ENCODE measurements at regions of chr18 and their contacts with region 1.

Region 1: GRCh38 chr18:21073180-21073579 is 38.4 kb downstream of the ROCK1 start:
- DNase-seq: no peak
- ATAC-seq: no peak
- H3K4me3 Mint-ChIP-seq: no peak overlapping the region
- H3K27ac Mint-ChIP-seq: no peak overlapping the region
- H3K4me1 Mint-ChIP-seq: peaks cover 54% of the 10 kb centered on the region
- H3K27me3 Mint-ChIP-seq: no peaks in the 10 kb centered on the region

Region 2: GRCh38 chr18:21085579-21086166 is 12.5 kb after region 1 on chr18:
- CTCF ChIA-PET with region 1: no interaction called
- POLR2A ChIA-PET with region 1: no interaction called
- intact Hi-C with region 1: no loop called
- DNase-seq: no peak
- ATAC-seq: no peak
- H3K4me3 Mint-ChIP-seq: no peak overlapping the region
- H3K27ac Mint-ChIP-seq: no peak overlapping the region
- H3K4me1 Mint-ChIP-seq: peaks cover 62% of the 10 kb centered on the region
- H3K27me3 Mint-ChIP-seq: no peaks in the 10 kb centered on the region

Region 3: GRCh38 chr18:21099442-21099841 is 26.3 kb after region 1 on chr18:
- CTCF ChIA-PET with region 1: no interaction called
- POLR2A ChIA-PET with region 1: interaction called, 5 read pairs
- intact Hi-C with region 1: loop called in 1 of 2 experiments (anchors 2 kb)
- DNase-seq: no peak
- ATAC-seq: no peak
- H3K4me3 Mint-ChIP-seq: no peak overlapping the region
- H3K27ac Mint-ChIP-seq: no peak overlapping the region
- H3K4me1 Mint-ChIP-seq: peaks cover 63% of the 10 kb centered on the region
- H3K27me3 Mint-ChIP-seq: no peaks in the 10 kb centered on the region

Measured in activated CD4-positive, alpha-beta T cell treated with anti-CD3 and anti-CD28 coated beads for 36 hours (primary cell).